A673 (cell line): ENCODE measurements at regions of chr2 and their contacts with region 1.

Region 1: DNA sequence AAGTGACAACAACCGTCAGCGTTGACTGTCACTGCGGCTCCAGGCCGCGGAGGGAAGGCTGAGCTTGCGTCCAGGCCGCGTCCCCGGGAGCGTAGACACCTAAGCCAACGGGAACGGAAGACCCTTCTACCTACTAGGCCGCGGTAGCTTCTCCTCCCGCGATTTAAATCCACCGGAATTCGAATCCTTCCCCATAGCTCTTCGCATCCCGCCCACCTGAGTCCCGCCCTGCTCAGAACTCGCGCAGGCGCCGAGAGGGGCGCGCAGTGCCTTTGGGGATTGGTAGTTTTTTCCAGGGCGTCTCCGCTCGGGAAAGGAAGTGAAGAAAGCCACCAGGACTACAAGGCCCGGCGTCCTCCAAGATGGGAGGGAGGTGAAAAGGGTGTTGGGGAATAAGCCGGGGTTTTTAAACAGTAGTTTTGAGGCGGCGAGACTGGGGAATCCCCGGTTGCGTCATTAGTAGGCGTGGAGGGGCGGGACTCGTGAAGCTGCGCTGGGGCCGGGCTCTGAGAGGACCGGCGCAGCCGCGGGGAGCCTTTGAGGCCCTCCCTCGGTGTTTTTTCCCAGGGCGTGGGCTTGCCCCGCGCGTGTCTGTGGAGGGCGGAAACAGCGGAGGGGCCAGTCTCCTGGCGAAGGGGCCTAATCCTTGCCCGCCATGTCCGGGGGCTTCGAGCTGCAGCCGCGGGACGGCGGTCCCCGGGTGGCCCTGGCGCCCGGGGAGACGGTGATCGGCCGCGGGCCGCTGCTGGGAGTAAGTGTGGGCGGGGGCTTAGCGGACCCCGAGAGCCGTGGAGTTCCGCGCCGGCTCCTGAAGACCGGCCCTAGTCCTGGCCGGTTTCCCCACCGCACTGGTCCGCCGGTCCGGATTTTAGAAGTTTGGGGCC is at the starts of genes APLF and FBXO48:
- DNase-seq: peak; percentile 100
- H3K4me3 ChIP-seq: peak within 1 kb of the TSS; percentile 88
- H3K27ac ChIP-seq: peak within 1 kb of the TSS; percentile 85
- H3K4me1 ChIP-seq: peaks cover 14% of the 10 kb centered on the region
- H3K27me3 ChIP-seq: no peaks in the 10 kb centered on the region
- CTCF ChIP-seq: no peak
- total RNA-seq, gene APLF: 5.5 and 6.4 TPM in 2 replicates
- total RNA-seq, gene FBXO48: 2.0 and 2.6 TPM in 2 replicates

Region 2: DNA sequence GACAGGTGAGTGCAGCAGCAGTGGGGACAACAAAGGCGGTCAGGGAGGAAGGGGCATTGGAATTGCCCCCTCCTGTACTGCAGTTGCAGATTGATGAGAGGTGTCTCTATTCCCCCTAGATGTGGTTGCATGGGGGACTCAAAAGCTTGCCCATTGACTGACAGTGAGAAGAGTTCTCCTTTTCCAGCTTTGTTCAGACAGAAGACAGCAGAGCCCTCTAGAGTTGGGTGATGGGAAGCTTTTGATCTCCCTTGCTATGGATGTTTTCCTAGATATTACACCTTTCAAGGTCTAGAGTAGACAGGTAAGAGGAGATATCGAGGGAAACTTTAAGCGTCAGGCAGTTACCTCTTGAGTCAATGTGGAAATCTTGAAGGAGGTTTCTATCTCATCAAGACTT is 179.0 kb after region 1 on chr2:
- CTCF ChIA-PET with region 1: interaction called, 7 read pairs
- POLR2A ChIA-PET with region 1: no interaction called
- intact Hi-C with region 1: loop called (anchors 5 kb)
- DNase-seq: peak; percentile 68
- H3K4me3 ChIP-seq: no peak overlapping the region
- H3K27ac ChIP-seq: no peak overlapping the region
- H3K4me1 ChIP-seq: peaks cover 41% of the 10 kb centered on the region
- H3K27me3 ChIP-seq: no peaks in the 10 kb centered on the region
- CTCF ChIP-seq: peak; percentile 70

Region 3: DNA sequence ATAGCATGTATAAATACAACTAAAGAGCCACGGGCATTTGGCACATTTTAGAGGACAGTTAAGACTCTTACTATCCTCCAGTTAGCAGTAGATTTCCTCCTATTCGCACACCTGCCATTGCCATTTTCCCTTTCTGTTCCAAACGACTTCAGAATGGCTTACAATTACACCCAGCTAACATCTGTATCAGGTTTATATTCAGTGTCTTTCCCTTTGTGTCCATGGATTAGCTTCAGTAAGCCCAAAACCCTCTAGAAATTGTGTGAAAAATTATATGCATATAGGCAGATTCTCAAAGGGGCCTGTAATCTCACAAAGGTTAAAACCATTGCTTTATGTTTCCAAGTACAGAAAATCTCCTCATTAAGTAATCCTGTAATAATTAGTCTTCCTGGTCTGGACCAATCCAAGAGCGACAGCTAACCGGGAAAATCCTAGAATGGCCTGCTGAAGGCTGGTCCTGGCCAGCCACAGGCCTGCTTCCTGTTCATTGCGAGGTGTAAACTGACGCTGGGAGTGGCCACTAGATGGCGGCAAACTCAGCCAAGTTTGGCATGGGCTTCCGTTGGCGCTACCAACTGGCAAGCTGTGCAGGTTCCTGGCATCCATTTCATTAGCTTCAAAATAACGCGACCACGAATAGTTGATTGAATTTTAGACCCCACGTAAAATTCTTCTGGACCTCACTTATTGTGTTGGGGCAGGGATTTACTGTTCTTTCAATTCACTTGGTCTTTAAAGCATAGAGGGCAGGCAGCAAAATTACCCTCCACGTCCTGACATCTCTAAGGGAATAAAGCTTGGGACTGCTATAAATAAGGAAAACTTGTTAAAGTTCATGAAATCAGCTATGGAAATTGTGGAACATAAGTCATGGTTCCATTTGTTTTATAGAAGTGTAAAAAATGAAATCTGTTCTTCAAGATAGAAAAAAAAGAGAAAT is 284.3 kb after region 1 on chr2:
- CTCF ChIA-PET with region 1: interaction called, 11 read pairs
- POLR2A ChIA-PET with region 1: no interaction called
- intact Hi-C with region 1: no loop called
- DNase-seq: peak; percentile 91
- H3K4me3 ChIP-seq: no peak overlapping the region
- H3K27ac ChIP-seq: no peak overlapping the region
- H3K4me1 ChIP-seq: peaks cover 10% of the 10 kb centered on the region
- H3K27me3 ChIP-seq: no peaks in the 10 kb centered on the region
- CTCF ChIP-seq: peak; percentile 97

Region 4: GRCh38 chr2:68909793-68910674 is 442.7 kb after region 1 on chr2:
- CTCF ChIA-PET with region 1: interaction called, 3 read pairs
- POLR2A ChIA-PET with region 1: no interaction called
- intact Hi-C with region 1: loop called (anchors 5 kb)
- DNase-seq: peak; percentile 88
- H3K4me3 ChIP-seq: no peak overlapping the region
- H3K27ac ChIP-seq: no peak overlapping the region
- H3K4me1 ChIP-seq: peaks cover 19% of the 10 kb centered on the region
- H3K27me3 ChIP-seq: no peaks in the 10 kb centered on the region
- CTCF ChIP-seq: peak; percentile 91

Region 5: DNA sequence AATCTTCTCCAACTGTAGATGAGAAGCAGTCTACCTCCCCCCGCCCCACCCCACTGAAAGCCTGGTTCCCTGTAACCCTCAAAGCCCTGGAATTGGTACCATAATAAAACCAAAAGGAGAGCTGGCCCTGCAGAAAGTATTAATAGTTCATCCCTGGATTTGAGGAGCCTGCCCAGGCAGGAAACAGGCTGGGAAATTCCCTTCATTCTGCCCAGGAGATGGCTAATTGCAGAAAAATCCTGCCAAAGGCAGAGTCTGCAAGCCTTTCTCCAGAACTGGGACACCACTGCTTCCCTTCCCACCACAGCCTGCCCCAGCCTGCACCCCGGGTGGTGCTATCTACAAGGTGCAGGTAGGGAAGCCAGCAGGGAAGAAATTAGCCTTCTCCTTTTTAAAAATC is 469.1 kb after region 1 on chr2:
- CTCF ChIA-PET with region 1: no interaction called
- POLR2A ChIA-PET with region 1: interaction called, 10 read pairs
- intact Hi-C with region 1: no loop called
- DNase-seq: no peak
- H3K4me3 ChIP-seq: no peak overlapping the region
- H3K27ac ChIP-seq: no peak overlapping the region
- H3K4me1 ChIP-seq: peaks cover 9% of the 10 kb centered on the region
- H3K27me3 ChIP-seq: no peaks in the 10 kb centered on the region
- CTCF ChIP-seq: no peak

Region 6: GRCh38 chr2:69095305-69095704 is 628.0 kb after region 1 on chr2:
- CTCF ChIA-PET with region 1: no interaction called
- POLR2A ChIA-PET with region 1: no interaction called
- intact Hi-C with region 1: loop called (anchors 10 kb)
- DNase-seq: peak; percentile 44
- H3K4me3 ChIP-seq: no peak overlapping the region
- H3K27ac ChIP-seq: peak overlapping the region; percentile 80
- H3K4me1 ChIP-seq: peaks cover 60% of the 10 kb centered on the region
- H3K27me3 ChIP-seq: no peaks in the 10 kb centered on the region
- CTCF ChIP-seq: no peak

Region 7: DNA sequence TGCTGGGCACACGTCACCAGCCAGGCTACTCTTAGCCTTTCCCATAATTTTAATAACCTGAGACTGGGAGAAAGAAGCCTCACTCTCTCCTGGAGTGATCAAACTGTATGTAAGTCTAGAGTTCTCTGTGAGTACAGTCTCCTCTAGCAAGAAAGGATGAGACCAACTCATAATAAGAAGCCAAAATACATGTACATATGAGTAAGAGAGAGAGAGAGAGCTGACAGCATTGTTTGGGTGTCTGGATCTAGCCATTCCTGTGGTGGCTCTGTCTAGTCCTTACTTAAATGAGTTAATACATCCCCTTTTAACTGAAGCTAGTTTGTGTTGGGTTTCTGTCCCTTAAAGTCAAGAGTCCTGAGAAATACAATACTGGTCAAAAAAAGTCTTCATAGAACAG is 1248.6 kb after region 1 on chr2:
- CTCF ChIA-PET with region 1: no interaction called
- POLR2A ChIA-PET with region 1: no interaction called
- intact Hi-C with region 1: loop called (anchors 5 kb)
- DNase-seq: no peak
- H3K4me3 ChIP-seq: no peak overlapping the region
- H3K27ac ChIP-seq: no peak overlapping the region
- H3K4me1 ChIP-seq: no peaks in the 10 kb centered on the region
- H3K27me3 ChIP-seq: no peaks in the 10 kb centered on the region
- CTCF ChIP-seq: no peak